PC-9 (cell line): ENCODE measurements at regions of chr18 and their contacts with region 1.

Region 1: DNA sequence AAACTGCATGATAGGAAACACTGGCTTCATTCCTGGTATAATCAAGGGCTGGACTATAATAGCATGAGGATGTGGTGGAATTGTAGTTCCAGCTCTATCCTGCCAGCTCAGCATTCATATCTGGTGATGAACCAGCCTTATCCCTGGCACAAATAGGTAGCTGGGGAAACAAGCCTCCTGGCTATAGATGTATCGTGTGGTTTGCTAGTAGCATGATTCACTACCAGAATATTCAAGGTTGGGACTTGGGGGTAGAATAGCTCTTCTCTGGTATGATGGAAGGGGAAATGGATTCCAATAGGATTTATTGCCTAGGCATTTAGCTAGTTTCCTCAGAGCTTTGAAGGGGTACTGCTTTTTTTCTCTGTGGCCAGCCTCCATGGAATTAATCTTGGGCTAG is 532.8 kb downstream of the FBXO15 start:
- DNase-seq: peak; percentile 14 to 91
- H3K4me3 ChIP-seq: no peak overlapping the region
- H3K27ac ChIP-seq: no peak overlapping the region
- H3K4me1 ChIP-seq: peaks cover 20% of the 10 kb centered on the region
- H3K27me3 ChIP-seq: no peaks in the 10 kb centered on the region
- CTCF ChIP-seq: no peak

Region 2: GRCh38 chr18:73331212-73331772 is 283.5 kb before region 1 on chr18:
- CTCF ChIA-PET with region 1: interaction called, 14 read pairs
- POLR2A ChIA-PET with region 1: no interaction called
- intact Hi-C with region 1: no loop called
- DNase-seq: no peak
- H3K4me3 ChIP-seq: no peak overlapping the region
- H3K27ac ChIP-seq: no peak overlapping the region
- H3K4me1 ChIP-seq: peaks cover 9% of the 10 kb centered on the region; the same call in 1 of the 2 replicates
- H3K27me3 ChIP-seq: no peaks in the 10 kb centered on the region
- CTCF ChIP-seq: no peak

Region 3: DNA sequence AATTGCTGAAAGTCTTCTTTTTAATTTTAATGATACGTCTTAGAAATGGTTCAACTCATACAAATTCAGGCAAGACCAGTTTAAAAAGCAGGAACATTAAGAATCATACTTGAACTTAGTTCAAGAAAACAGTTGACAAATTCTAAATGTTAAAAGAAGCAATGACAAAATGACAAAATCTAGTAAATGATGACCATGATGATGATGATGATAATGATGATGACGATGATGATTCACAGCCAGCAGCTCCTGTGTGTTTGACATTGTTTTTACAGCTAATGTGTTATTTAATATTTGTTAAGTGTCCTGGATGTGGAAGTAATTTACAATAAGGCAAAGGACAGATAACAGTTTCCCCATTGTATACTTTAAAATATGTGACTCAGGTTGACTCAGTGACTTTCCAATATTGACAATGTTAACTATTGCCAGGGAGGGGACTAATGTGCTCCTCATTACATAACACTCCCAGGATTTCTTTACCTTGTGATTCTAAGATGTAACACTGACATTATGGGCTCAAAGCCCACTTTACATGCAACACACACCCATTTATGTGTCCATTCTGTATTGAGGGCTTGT is 69.4 kb before region 1 on chr18:
- CTCF ChIA-PET with region 1: no interaction called
- POLR2A ChIA-PET with region 1: no interaction called
- intact Hi-C with region 1: no loop called
- DNase-seq: peak in 1 of 2 experiments; percentile 55
- H3K4me3 ChIP-seq: no peak overlapping the region
- H3K27ac ChIP-seq: no peak overlapping the region
- H3K4me1 ChIP-seq: peaks cover 9% of the 10 kb centered on the region; the same call in 1 of the 2 replicates
- H3K27me3 ChIP-seq: no peaks in the 10 kb centered on the region
- CTCF ChIP-seq: no peak